Endothelial cell of umbilical vein (primary cell): ENCODE measurements at regions of chr4 and their contacts with region 1.

Region 1: GRCh38 chr4:139030614-139031235 is 15.1 kb downstream of the NOCT start:
- DNase-seq: peak; percentile 84
- H3K4me3 ChIP-seq: no peak overlapping the region
- H3K27ac ChIP-seq: no peak overlapping the region
- H3K4me1 ChIP-seq: no peaks in the 10 kb centered on the region
- H3K27me3 ChIP-seq: no peaks in the 10 kb centered on the region
- CTCF ChIP-seq: peak; percentile 74 to 76
- POLR2A ChIP-seq: no peak

Region 2: GRCh38 chr4:139050446-139050845 is 19.7 kb after region 1 on chr4:
- CTCF ChIA-PET with region 1: interaction called, 140 read pairs
- POLR2A ChIA-PET with region 1: no interaction called
- dilution Hi-C with region 1: no loop called
- intact Hi-C with region 1: no loop called
- DNase-seq: no peak
- H3K4me3 ChIP-seq: no peak overlapping the region
- H3K27ac ChIP-seq: no peak overlapping the region
- H3K4me1 ChIP-seq: peaks cover 5% of the 10 kb centered on the region
- H3K27me3 ChIP-seq: no peaks in the 10 kb centered on the region
- CTCF ChIP-seq: no peak
- POLR2A ChIP-seq: no peak

Region 3: DNA sequence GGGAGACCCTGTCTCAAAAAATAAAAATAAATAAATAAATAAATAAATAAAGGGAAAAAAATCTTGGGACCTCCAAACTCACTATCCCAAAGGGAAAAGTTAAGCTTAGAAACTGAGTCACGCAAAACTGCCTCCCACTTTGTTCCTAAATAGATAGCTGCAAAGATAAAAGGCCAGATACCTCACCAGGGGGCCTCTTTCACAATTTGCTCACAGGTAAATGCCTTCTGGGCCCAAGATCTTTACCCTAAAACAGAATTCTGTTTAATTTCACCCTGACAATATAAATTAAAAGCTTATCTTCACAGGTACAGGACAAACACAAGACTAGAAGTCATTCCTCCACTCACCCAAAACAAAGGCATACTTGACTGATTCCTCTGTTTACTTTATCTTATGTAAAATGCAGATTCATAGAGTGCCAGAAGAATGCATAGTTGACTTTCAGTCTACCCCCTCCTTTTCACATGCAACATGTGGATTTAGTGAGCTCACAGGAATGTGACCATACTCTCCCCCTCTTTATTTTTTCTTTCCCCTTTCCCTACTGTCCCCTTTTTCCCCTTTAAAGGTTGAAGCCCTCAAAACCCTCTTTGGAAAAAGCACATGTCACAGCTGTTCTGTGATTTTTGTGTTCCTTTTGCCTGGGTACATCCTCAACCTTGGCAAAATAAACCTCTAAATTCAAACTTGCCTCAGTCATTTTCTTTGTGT is 122.9 kb after region 1 on chr4:
- CTCF ChIA-PET with region 1: interaction called, 11 read pairs
- POLR2A ChIA-PET with region 1: no interaction called
- dilution Hi-C with region 1: no loop called
- intact Hi-C with region 1: no loop called
- DNase-seq: no peak
- H3K4me3 ChIP-seq: no peak overlapping the region
- H3K27ac ChIP-seq: no peak overlapping the region
- H3K4me1 ChIP-seq: no peaks in the 10 kb centered on the region
- H3K27me3 ChIP-seq: no peaks in the 10 kb centered on the region
- CTCF ChIP-seq: no peak
- POLR2A ChIP-seq: no peak

Region 4: GRCh38 chr4:139229534-139230039 is 198.9 kb after region 1 on chr4:
- CTCF ChIA-PET with region 1: interaction called, 18 read pairs
- POLR2A ChIA-PET with region 1: no interaction called
- dilution Hi-C with region 1: no loop called
- intact Hi-C with region 1: loop called (anchors 5 kb)
- DNase-seq: peak; percentile 64
- H3K4me3 ChIP-seq: no peak overlapping the region
- H3K27ac ChIP-seq: no peak overlapping the region
- H3K4me1 ChIP-seq: no peaks in the 10 kb centered on the region
- H3K27me3 ChIP-seq: no peaks in the 10 kb centered on the region
- CTCF ChIP-seq: peak; percentile 36 to 50
- POLR2A ChIP-seq: no peak

Region 5: DNA sequence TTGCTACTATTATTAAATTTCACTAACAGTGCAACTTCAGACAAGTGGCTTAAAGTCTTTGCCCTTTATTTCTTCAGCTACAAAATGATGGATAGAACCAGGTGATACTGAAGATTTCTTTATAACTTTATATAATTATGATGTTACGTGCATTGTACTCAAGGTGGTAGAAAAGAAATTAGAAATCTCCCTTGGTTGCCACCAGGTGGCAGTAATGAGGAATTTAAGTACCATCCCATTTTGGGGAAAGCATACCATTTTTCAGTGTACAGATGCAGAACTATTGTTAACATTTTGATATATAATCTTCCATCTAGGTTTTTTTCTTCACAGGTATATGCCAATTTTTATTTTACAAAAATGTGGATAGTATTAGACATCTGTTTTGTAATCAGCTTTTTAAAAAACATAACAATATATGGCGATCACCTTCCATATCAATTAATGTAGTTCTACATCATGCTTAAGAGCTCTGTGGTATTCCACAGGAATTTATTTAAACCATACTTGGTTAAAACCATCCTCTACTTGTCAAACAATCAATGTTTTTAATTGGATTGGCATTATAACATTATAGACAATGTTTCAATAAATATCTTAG is 385.4 kb after region 1 on chr4:
- CTCF ChIA-PET with region 1: interaction called, 11 read pairs
- POLR2A ChIA-PET with region 1: no interaction called
- dilution Hi-C with region 1: no loop called
- intact Hi-C with region 1: loop called (anchors 5 kb)
- DNase-seq: peak; percentile 58
- H3K4me3 ChIP-seq: no peak overlapping the region
- H3K27ac ChIP-seq: no peak overlapping the region
- H3K4me1 ChIP-seq: peaks cover 40% of the 10 kb centered on the region
- H3K27me3 ChIP-seq: no peaks in the 10 kb centered on the region
- CTCF ChIP-seq: peak; percentile 35 to 42
- POLR2A ChIP-seq: no peak

Region 6: DNA sequence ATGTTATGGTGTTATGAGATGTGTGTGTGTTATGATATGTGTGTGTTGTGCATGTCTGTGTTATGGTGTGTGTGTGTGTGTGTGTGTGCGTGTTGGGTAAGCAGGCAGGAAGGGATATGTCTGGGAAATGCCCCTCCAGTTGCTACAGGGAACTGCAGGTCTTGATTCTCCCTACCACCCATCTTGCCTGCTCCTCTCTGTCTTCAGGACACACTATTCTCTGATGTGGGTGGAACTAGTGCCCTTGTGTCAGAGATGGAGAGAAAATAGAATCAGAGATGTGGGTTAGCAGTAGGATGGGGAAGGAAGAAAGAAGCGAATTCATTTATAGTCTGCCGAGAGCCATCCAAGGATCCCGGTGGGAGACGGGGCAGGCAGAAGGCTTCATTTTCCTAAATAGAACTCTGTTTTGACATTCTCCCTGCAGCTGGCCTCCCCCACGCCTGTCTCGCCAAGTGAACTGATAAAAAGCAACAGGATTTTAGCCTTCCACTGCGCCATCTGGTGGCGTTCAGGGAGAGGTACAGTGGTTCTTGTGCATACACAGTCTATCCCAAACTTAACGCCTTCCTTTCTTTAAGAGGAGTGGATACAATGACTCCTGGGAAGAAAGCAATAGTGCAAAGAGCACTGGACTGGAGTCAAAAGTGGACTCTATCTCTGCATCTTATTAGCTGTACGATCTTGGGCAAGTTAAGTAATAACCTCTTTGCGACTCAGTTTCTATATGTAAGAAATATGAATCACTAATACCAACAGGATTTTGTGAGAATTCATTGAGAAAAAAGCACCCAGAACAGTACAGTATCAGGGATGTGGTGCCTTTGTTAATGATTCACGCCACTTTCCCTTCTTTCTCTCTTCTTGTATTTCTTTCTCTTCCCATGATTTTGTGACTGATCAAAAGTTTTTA is 620.8 kb after region 1 on chr4:
- CTCF ChIA-PET with region 1: interaction called, 18 read pairs
- POLR2A ChIA-PET with region 1: no interaction called
- dilution Hi-C with region 1: no loop called
- intact Hi-C with region 1: loop called (anchors 2 kb)
- DNase-seq: peak; percentile 82
- H3K4me3 ChIP-seq: no peak overlapping the region
- H3K27ac ChIP-seq: no peak overlapping the region
- H3K4me1 ChIP-seq: no peaks in the 10 kb centered on the region
- H3K27me3 ChIP-seq: no peaks in the 10 kb centered on the region
- CTCF ChIP-seq: peak; percentile 85 to 88
- POLR2A ChIP-seq: no peak